ENCODE measurements at regions of chr22 and their contacts with region 1.

Region 1: GRCh38 chr22:23750714-23751440 is at the start of gene ZNF70:
- DNase-seq: no peak
- H3K4me3 ChIP-seq: peak within 1 kb of the TSS; percentile 61 to 90 (median 86)
- H3K27ac ChIP-seq: peak within 1 kb of the TSS; percentile 88 to 92 (median 92)
- H3K4me1 ChIP-seq: peaks cover 10 to 26% (median 22%) of the 10 kb centered on the region in 4 donors
- H3K27me3 ChIP-seq: no peaks in the 10 kb centered on the region
- CTCF ChIP-seq: peak in 1 of 3 experiments; percentile 26
- EP300 ChIP-seq: no peak
- POLR2A ChIP-seq: peak; percentile 48
- total RNA-seq, gene ZNF70: 3.1 to 6.5 (median 5.4) TPM

Region 2: DNA sequence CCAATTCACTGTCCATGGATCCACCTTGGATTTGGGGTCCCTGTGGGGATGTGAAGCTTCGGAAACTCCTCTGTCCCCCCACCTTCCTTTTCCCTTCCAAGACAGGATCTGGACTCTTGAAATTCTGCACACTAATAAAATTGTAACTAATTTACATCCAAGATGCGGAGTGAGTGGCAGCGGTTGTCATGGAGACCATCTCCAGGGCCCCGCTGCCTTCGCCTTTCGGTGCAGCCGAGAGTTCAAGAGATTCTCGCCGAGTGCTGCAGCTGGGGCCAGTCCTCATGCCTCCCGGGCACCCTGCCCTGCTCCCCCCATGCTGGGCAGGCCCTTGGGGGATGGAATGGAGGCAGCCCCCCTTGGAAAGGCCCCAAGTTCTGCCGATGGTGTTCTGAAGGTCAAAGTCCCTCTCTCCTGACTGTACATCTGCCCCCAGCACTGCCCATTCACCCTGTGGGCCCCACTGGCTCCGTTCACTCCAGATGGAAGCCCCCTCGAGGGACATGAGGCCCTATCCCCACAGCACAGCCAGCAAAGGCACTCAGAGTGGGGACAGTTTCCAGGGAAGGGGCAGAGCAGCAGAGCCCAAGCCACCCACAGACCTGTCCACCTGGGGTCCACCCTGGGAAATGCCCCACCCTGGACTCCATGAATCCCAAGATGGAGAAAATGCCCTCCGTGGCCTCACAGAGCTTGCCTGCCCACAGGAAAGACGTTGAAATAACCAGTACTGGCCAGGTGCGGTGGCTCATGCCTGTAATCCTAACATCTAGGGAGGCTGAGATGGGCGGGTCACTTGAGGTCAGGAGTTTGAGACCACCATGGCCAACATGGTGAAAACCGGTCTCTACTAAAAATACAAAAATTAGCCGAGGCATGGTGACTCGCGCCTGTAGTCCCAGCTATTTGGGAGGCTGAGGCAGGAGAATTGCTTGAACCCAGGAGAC is 196.7 kb before region 1 on chr22:
- intact Hi-C with region 1: no loop called
- DNase-seq: no peak
- H3K4me3 ChIP-seq: no peak overlapping the region
- H3K27ac ChIP-seq: no peak overlapping the region
- H3K4me1 ChIP-seq: no peaks in the 10 kb centered on the region
- H3K27me3 ChIP-seq: peaks cover 0 to 58% (median 2%) of the 10 kb centered on the region in 4 donors
- CTCF ChIP-seq: no peak
- EP300 ChIP-seq: no peak
- POLR2A ChIP-seq: no peak

Region 3: GRCh38 chr22:23716811-23717801 is 33.8 kb before region 1 on chr22:
- intact Hi-C with region 1: loop called (anchors 5 kb)
- DNase-seq: no peak
- H3K4me3 ChIP-seq: peak overlapping the region; percentile 86 to 92 (median 90)
- H3K27ac ChIP-seq: peak overlapping the region; percentile 62 to 83 (median 77)
- H3K4me1 ChIP-seq: peaks cover 10 to 24% (median 22%) of the 10 kb centered on the region in 4 donors
- H3K27me3 ChIP-seq: no peaks in the 10 kb centered on the region
- CTCF ChIP-seq: no peak
- EP300 ChIP-seq: no peak
- POLR2A ChIP-seq: peak; percentile 39

Region 4: DNA sequence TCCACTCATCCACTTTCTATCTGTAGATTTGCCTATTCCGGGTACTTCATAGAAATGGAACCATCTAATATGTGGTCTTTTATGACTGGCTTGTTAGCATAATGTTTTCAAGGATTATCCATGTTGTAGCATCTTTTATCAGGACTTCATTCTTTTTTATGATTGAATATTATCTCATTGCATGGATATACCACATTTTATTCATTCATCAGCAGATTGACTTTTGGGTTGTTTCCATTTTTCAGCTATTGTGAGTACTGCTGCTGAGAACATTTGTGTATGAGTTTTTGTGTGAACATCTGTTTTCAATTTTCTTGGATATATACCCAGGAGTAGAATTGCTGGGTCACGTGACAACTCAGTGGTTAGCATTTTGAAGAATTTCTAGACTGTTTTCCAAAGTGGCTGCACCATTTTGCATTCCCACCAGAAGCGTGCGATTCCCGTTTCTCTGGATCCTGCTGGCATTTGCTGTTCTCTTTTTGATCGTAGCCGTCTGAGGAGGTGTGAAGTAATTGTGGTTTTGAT is 79.0 kb after region 1 on chr22:
- intact Hi-C with region 1: no loop called
- DNase-seq: no peak
- H3K4me3 ChIP-seq: no peak overlapping the region
- H3K27ac ChIP-seq: no peak overlapping the region
- H3K4me1 ChIP-seq: peaks cover 0 to 48% (median 3%) of the 10 kb centered on the region in 4 donors
- H3K27me3 ChIP-seq: no peaks in the 10 kb centered on the region
- CTCF ChIP-seq: no peak
- EP300 ChIP-seq: no peak
- POLR2A ChIP-seq: no peak